AG04450 (cell line): ENCODE measurements at regions of chr13 and their contacts with region 1.

Region 1: GRCh38 chr13:52450012-52450792 is at the start of gene VPS36:
- DNase-seq: peak; percentile 83
- H3K4me3 ChIP-seq: peak within 1 kb of the TSS; percentile 87
- H3K27ac ChIP-seq: peak within 1 kb of the TSS; percentile 70
- H3K27me3 ChIP-seq: no peaks in the 10 kb centered on the region
- CTCF ChIP-seq: peak; percentile 88
- polyA plus RNA-seq, gene VPS36: 20.5 and 24.2 TPM in 2 replicates

Region 2: DNA sequence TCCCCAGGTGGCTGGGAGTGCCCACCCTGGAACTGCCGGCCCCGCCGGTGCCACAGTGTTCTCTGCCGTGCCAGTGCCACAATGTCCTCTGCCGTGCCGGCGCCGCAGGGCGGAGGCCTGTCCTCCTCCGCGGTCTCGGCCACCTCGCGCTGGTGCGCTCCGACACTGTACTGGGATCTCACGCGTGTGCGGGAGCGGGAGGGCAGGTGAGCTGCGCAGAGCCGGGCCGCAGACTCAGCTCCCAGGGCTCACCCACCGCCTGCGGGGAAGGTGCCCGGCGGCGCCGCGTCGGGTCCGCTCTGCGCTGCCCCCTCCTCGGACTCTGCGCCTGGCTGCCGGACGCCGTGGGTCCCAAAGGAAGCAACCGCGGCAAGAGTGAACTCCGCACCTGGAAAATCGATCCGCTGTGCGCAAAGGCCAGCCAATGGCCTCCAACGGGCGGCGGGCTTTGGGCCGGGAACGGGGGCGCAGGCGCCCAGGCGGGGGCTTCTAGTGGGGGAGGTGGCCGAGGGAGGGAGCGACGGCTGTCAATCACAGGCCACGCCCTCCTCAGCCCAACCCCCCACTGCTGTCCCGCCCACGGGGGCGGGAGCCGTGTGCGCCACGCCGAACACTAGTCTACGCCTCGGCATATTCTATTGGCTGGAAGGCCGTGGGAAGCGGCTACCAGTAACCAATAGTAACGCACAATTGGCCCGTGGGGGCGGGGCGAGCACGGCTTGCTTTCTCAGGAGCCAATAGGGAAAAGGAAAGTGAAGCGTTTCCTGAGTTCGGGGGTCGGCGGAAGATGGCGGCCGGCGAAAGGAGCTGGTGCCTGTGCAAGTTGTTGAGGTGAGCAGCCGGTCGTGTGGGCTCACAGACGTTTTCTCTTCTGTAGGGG is 438.3 kb before region 1 on chr13 and contains the start of gene ALG11:
- CTCF ChIA-PET with region 1: interaction called, 10 read pairs
- POLR2A ChIA-PET with region 1: no interaction called
- DNase-seq: peak; percentile 93
- H3K4me3 ChIP-seq: peak within 1 kb of the TSS; percentile 98
- H3K27ac ChIP-seq: peak within 1 kb of the TSS; percentile 31
- H3K27me3 ChIP-seq: peaks cover 18% of the 10 kb centered on the region
- CTCF ChIP-seq: no peak
- polyA plus RNA-seq, gene ALG11: 13.9 and 19.6 TPM in 2 replicates

Region 3: GRCh38 chr13:52194184-52194868 is 255.9 kb before region 1 on chr13:
- CTCF ChIA-PET with region 1: interaction called, 11 read pairs
- POLR2A ChIA-PET with region 1: interaction called, 3 read pairs
- DNase-seq: peak; percentile 65
- H3K4me3 ChIP-seq: peak overlapping the region; percentile 96
- H3K27ac ChIP-seq: peak overlapping the region; percentile 34
- H3K27me3 ChIP-seq: no peaks in the 10 kb centered on the region
- CTCF ChIP-seq: no peak

Region 4: GRCh38 chr13:52366291-52366690 is 83.9 kb before region 1 on chr13:
- CTCF ChIA-PET with region 1: interaction called, 10 read pairs
- POLR2A ChIA-PET with region 1: no interaction called
- DNase-seq: no peak
- H3K4me3 ChIP-seq: no peak overlapping the region
- H3K27ac ChIP-seq: no peak overlapping the region
- H3K27me3 ChIP-seq: no peaks in the 10 kb centered on the region
- CTCF ChIP-seq: no peak

Region 5: GRCh38 chr13:52392381-52392780 is 57.8 kb before region 1 on chr13:
- CTCF ChIA-PET with region 1: interaction called, 16 read pairs
- POLR2A ChIA-PET with region 1: no interaction called
- DNase-seq: no peak
- H3K4me3 ChIP-seq: no peak overlapping the region
- H3K27ac ChIP-seq: no peak overlapping the region
- H3K27me3 ChIP-seq: no peaks in the 10 kb centered on the region
- CTCF ChIP-seq: no peak

Region 6: DNA sequence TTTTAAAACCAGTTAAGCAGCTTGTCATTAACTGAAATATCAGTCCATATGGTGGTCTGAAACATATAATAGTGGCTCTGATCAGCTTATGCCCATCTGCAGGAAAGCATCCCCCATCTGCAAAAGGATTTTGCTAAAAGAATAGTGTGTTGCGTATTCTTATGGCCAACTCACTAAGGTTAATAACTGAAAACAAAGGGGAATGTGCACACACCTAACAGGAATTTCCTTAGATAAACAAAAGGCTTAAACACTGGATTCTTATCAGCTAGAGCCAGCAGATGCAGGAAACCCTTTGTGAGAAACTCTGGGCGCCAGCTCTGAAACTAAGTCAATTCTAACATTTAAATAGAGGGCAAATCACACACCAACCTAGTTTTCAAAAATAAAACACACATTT is 21.9 kb before region 1 on chr13:
- CTCF ChIA-PET with region 1: interaction called, 30 read pairs
- POLR2A ChIA-PET with region 1: interaction called, 11 read pairs
- DNase-seq: peak; percentile 41
- H3K4me3 ChIP-seq: no peak overlapping the region
- H3K27ac ChIP-seq: no peak overlapping the region
- H3K27me3 ChIP-seq: no peaks in the 10 kb centered on the region
- CTCF ChIP-seq: no peak